Naive thymus-derived CD4-positive, alpha-beta T cell (primary cell): ENCODE measurements at regions of chr3 and their contacts with region 1.

Region 1: DNA sequence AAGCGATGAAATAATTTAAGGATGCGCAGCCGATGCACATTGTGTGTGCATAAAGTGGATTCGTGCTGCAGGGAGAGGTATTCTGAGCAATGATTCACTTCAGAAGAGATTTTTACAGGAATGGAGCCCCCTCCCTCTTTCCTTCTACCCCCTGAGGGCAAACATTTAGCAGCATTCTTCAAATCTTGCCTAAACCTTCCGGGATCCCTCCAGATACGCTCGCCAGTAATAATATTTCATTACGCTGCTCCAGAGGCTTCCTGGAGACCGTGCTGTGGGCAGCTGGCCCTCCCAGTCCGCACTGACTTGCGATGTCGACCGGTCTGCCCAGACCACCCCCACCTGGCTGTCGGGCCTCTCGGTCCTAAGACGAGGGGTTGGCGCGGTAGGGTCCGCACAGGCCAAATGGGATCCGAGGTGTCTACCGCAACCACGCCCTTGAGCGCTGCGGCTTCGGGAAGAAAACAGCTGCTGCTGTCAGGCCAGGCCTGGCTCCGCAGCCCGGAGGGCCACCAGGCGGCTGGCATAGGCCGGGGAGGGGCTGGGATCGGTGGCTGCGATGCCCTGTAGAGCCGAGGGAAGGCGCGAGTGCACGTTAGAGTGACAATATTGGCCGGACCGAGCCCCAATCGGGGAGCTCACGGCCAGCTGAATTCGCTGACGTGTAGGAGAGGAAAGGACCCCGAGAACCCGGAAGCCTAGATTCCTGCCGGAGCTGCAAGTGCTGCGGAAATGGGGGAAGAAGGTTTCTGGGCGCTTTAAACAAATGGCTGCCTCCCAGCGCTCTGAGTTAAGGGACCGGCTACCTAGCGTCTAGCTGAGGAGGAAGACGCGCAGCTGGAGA is 14.3 kb downstream of the ZIC4 start:
- DNase-seq: no peak
- ATAC-seq: no peak
- H3K4me3 ChIP-seq: no peak overlapping the region
- H3K4me3 Mint-ChIP-seq: peak overlapping the region in 1 of 10 donors; percentile 23
- H3K27ac ChIP-seq: no peak overlapping the region
- H3K27ac Mint-ChIP-seq: peak overlapping the region in 1 of 9 donors; percentile 62
- H3K4me1 ChIP-seq: no peaks in the 10 kb centered on the region
- H3K4me1 Mint-ChIP-seq: peaks cover 0 to 8% (median 4%) of the 10 kb centered on the region in 7 donors
- H3K27me3 ChIP-seq: peaks cover 0 to 20% of the 10 kb centered on the region in 2 donors
- H3K27me3 Mint-ChIP-seq: peaks cover 69 to 84% (median 72%) of the 10 kb centered on the region in 5 donors

Region 2: DNA sequence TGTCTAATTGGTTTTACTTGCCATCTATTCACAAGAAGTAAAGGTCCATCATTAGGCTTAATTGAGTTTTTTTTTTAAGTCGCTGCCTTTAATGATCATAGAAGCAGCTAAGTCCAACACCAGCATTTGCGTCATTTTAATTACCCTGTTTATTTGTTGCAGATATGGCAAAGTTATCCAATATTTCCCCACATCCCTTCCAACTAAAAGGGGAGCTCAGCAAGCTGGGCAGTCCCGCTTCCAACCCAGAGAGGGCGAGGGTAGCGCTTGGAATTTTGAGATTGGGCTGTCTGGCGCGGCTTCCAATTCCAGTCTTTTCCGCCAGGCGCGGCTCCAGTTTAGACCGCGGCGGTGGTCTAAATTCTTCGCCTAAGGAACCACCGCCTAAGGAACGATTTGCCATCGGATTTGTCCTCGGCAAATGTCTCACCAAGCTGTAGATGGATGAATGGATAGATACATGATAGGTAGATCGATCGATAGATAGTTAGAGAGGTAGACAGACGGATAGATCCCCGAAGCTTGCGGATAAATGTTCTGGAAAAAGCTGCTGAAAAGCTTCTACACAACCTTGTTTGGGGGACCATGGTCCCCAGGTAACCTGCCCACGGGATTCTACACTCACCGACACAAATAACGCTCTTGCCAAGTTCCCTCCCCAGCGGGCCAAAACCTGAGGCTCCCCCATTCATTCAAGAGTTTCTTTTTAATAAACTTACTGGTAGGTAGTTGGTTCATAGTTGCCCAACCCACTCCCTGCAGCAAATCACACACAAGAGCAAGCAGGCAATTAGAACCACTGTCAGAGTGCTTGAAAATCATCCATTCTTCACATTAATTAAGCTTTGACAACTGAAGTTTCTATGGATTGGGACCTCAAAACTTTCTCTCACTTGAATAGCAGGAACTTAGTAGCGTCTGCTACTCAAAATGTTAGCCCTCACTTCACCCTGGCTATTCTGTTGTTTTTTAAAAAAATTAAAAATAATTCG is 34.8 kb before region 1 on chr3:
- CTCF ChIA-PET with region 1: no interaction called
- POLR2A ChIA-PET with region 1: no interaction called
- intact Hi-C with region 1: loop called in 1 of 2 experiments (anchors 2 kb)
- DNase-seq: no peak
- ATAC-seq: no peak
- H3K4me3 ChIP-seq: no peak overlapping the region
- H3K4me3 Mint-ChIP-seq: no peak overlapping the region
- H3K27ac ChIP-seq: no peak overlapping the region
- H3K27ac Mint-ChIP-seq: peak overlapping the region in 1 of 9 donors; percentile 77
- H3K4me1 ChIP-seq: no peaks in the 10 kb centered on the region
- H3K4me1 Mint-ChIP-seq: peaks cover 0 to 9% (median 2%) of the 10 kb centered on the region in 7 donors
- H3K27me3 ChIP-seq: peaks cover 0 to 18% of the 10 kb centered on the region in 2 donors
- H3K27me3 Mint-ChIP-seq: peaks cover 84 to 90% (median 89%) of the 10 kb centered on the region in 5 donors

Region 3: GRCh38 chr3:147410526-147411237 is 18.7 kb after region 1 on chr3:
- CTCF ChIA-PET with region 1: no interaction called
- POLR2A ChIA-PET with region 1: no interaction called
- intact Hi-C with region 1: loop called in 1 of 2 experiments (anchors 1 kb)
- DNase-seq: peak in 2 of 9 donors; percentile 10 to 17
- ATAC-seq: no peak
- H3K4me3 ChIP-seq: no peak overlapping the region
- H3K4me3 Mint-ChIP-seq: peak overlapping the region; percentile 34 to 80 (median 60)
- H3K27ac ChIP-seq: no peak overlapping the region
- H3K27ac Mint-ChIP-seq: peak overlapping the region in 1 of 9 donors; percentile 77
- H3K4me1 ChIP-seq: peaks cover 0 to 5% of the 10 kb centered on the region in 2 donors
- H3K4me1 Mint-ChIP-seq: peaks cover 14 to 57% (median 34%) of the 10 kb centered on the region in 7 donors
- H3K27me3 ChIP-seq: peaks cover 0 to 32% of the 10 kb centered on the region in 2 donors
- H3K27me3 Mint-ChIP-seq: peaks cover 77 to 86% (median 85%) of the 10 kb centered on the region in 5 donors

Region 4: DNA sequence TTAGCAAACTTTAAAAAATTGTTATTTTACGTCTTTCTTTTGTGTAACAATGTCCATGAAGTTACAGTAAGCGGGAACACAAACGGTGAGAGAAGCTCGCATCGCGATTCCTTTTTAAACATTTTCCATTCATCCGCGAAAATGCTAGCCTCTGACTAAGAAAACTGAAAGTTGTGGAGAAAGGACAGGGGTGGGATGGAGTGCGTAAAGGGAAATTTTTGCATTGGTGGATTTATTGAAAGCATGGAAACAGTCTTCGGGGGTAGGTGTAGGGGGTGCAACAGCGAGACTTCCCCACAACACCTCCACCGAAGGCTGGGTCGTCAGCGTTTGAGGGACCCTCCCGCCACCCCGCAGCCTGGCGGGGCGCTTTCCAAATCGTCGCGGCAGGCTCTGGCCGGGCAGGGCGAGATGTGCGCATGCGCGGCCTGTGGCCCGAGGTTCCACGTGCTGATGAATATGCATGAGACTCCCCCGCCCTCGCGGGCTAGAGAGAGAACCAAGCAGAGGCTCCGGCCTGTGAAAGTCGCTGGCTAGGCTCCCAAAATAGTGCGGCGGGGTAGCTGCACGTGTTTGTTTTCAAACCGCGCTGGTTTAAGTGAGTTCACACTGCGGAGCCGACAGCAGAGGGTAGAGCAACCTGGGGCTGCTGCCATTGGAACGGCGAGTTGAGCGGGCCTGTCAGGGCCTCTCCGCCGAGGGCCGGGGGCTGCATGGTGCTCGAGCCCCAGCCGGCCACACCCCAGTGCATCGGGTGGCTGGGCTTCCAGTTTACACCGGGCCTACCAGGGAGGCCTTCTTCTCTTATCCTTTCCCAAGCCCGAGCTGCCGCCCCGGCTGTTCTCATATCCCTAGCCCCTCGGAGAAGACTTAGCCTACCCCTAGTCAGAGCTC is 27.1 kb after region 1 on chr3:
- CTCF ChIA-PET with region 1: no interaction called
- POLR2A ChIA-PET with region 1: no interaction called
- intact Hi-C with region 1: loop called in 1 of 2 experiments (anchors 2 kb)
- DNase-seq: no peak
- ATAC-seq: no peak
- H3K4me3 ChIP-seq: no peak overlapping the region
- H3K4me3 Mint-ChIP-seq: no peak overlapping the region
- H3K27ac ChIP-seq: no peak overlapping the region
- H3K27ac Mint-ChIP-seq: no peak overlapping the region
- H3K4me1 ChIP-seq: no peaks in the 10 kb centered on the region
- H3K4me1 Mint-ChIP-seq: peaks cover 0 to 13% (median 7%) of the 10 kb centered on the region in 7 donors
- H3K27me3 ChIP-seq: peaks cover 0 to 28% of the 10 kb centered on the region in 2 donors
- H3K27me3 Mint-ChIP-seq: peaks cover 84 to 90% (median 86%) of the 10 kb centered on the region in 5 donors